Heart left ventricle (tissue), 16 donors: ENCODE measurements at regions of chr16 and their contacts with region 1.

Region 1: GRCh38 chr16:67028555-67029248 is at the start of gene CBFB:
- DNase-seq: peak; percentile 94 to 97 (median 94)
- ATAC-seq: peak; percentile 87 to 96 (median 94)
- H3K4me3 ChIP-seq: peak within 1 kb of the TSS; percentile 58 to 99 (median 94)
- H3K27ac ChIP-seq: peak within 1 kb of the TSS; percentile 90 to 100 (median 99)
- H3K4me1 ChIP-seq: peaks cover 0 to 36% (median 28%) of the 10 kb centered on the region in 12 donors
- H3K27me3 ChIP-seq: no peaks in the 10 kb centered on the region
- CTCF ChIP-seq: peak in 2 of 12 donors; percentile 7 to 23
- POLR2A ChIP-seq: peak; percentile 18 to 77
- total RNA-seq, gene CBFB: 16.4 to 53.6 (median 28.1) TPM

Region 2: DNA sequence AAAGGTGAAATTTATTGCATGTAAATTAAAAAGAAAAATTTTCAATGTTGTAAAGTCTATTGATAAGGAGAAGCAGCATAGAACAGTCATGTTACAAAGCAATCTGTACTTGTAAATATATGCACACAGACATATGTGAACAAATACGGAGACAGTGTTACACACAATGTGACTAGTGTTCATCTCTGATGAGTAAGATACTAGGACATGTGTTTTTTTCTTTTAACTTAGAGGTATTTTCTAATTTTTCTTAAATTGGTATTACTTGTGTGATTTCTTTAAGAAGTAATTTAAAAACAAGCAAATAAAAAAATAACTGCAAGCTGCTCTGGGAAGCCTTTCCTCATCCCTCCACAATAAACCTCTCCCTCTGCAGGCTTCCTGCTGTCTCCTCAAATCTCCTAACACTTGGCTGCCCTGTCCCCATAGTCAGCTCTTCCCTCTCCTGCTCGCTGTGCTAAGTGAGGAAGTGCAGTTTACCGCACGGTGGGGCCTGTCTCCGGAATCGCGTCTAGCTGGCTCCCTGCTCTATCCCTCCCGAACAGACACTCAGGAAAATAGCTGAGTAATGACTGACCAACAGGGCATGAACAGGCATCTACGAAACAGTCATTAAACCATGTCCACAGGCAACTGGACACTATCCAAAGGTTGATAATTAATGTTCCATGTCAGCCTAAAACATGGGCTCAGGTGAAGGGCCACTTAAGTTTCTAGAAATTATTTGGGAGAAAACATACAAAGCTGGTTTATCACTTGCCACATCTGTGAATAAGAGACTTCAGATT is 368.1 kb before region 1 on chr16:
- intact Hi-C with region 1: no loop called
- DNase-seq: peak; percentile 71 to 82 (median 75)
- ATAC-seq: peak; percentile 93 to 97 (median 97)
- H3K4me3 ChIP-seq: no peak overlapping the region
- H3K27ac ChIP-seq: peak overlapping the region; percentile 0 to 78 (median 62)
- H3K4me1 ChIP-seq: peaks cover 3 to 32% (median 25%) of the 10 kb centered on the region in 12 donors
- H3K27me3 ChIP-seq: no peaks in the 10 kb centered on the region
- CTCF ChIP-seq: peak in 7 of 12 donors; percentile 5 to 52 (median 33)
- POLR2A ChIP-seq: no peak

Region 3: GRCh38 chr16:67006930-67007658 is 21.6 kb before region 1 on chr16:
- intact Hi-C with region 1: no loop called
- DNase-seq: no peak
- ATAC-seq: no peak
- H3K4me3 ChIP-seq: no peak overlapping the region
- H3K27ac ChIP-seq: no peak overlapping the region
- H3K4me1 ChIP-seq: no peaks in the 10 kb centered on the region
- H3K27me3 ChIP-seq: peaks cover 0 to 7% (median 0%) of the 10 kb centered on the region in 9 donors
- CTCF ChIP-seq: no peak
- POLR2A ChIP-seq: no peak

Region 4: DNA sequence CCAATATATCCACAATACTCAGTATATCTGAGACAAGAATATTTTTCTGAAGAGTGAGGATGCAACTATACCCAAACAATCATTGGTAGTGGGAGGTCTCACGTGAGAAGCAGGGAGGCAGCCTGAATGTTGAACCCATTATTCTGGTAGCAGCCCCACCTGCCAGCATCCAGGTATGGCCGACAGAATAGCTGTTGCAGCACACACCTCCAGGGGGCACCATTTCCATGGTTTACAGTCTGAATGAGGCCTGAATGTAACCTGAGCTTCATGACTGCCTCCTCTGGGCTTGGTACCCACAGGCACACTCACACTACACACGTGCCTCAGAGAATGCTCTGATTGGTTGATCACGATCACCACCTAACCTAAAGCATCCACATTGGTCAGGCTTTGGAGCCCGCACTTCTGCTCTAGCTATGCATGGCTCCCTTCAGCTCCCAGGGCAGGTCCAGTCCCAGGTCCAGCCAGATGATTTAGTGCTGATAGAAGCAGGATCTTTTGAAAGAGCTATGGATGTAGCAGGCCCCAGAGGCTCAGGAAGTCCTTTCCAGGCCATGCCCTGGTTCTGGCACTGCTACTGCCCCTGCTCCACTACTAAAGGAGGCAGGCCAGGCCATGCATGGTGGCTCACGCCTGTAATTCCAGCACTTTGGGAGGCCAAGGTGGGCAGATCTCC is 10.8 kb before region 1 on chr16:
- intact Hi-C with region 1: loop called in 1 of 10 experiments (anchors 1 kb)
- DNase-seq: peak in 2 of 5 donors; percentile 45 to 47
- ATAC-seq: peak; percentile 14 to 41 (median 35)
- H3K4me3 ChIP-seq: no peak overlapping the region
- H3K27ac ChIP-seq: no peak overlapping the region
- H3K4me1 ChIP-seq: peaks cover 0 to 22% (median 18%) of the 10 kb centered on the region in 12 donors
- H3K27me3 ChIP-seq: peaks cover 0 to 20% (median 0%) of the 10 kb centered on the region in 9 donors
- CTCF ChIP-seq: peak in 11 of 12 donors; percentile 27 to 59 (median 50)
- POLR2A ChIP-seq: no peak

Region 5: DNA sequence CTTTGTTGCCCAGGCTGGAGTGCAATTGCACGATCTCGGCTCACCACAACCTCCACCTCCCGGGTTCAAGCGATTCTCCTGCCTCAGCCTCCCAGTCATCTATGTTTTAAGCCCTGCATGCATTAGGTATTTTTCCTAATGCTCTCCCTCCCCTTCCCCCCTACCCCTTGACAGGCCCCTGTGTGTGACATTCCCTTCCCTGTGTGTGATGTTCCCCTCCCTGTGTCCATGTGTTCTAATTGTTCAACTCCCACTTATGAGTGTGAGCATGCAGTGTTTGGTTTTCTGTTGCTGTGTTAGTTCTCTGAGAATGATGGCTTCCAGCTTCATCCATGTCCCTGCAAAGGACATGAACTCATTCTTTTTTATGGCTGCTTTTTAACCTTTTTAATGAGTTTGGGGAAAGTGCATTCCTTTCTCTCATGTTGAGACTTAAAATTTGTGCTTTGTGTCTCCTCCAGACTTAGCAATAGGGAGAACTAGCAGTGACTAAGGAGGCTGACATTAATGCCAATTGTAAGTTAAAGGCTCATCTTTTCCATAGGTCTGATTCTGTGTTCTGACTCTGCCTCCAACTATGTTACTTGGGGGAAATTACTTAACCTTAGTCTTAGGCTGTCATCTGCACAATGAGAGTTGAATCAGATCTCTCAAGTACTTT is 63.3 kb after region 1 on chr16:
- intact Hi-C with region 1: loop called in 1 of 10 experiments (anchors 10 kb)
- DNase-seq: no peak
- ATAC-seq: no peak
- H3K4me3 ChIP-seq: no peak overlapping the region
- H3K27ac ChIP-seq: no peak overlapping the region
- H3K4me1 ChIP-seq: peaks cover 0 to 6% (median 0%) of the 10 kb centered on the region in 12 donors
- H3K27me3 ChIP-seq: no peaks in the 10 kb centered on the region
- CTCF ChIP-seq: no peak
- POLR2A ChIP-seq: no peak

Region 6: DNA sequence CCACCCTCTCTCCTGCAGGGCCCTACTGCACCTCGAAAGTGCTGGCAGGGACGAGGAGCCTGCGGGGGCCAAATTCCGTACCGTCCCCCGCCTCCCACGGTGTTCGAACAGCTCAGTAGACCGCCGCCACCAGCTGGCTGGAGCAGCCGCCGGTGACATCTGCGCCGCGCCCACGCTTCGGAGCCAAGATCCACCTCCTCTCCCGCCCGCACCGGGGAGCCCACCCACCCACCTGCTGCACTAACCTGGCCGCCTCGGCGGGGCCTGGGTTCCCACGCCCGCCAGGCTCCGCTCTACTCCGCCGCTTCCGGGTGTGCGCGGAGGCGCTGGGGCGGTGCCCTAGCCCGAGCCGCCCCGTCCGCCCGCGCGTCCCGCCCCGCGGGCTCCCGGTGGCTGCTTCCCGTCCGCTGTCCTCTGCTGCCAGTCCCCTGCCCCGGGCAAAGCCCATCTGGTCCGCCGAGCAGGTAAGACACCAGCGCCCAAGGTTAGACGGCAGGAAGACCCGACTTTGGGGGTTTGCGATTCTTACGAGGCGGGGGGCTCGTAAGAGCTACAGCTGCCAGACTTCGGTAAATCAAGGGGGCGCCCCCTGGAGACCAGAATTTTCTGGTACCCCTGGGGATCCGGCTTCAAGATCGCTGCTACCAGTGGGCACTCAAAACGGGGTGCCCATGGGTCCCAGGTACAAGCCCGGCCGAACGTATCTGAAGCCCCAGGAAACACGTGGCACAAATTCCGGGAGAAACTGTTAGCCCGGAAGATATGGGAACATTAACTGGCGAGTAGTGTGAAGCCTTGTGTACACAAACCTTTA is 131.1 kb after region 1 on chr16 and contains the starts of genes FBXL8 and TRADD:
- intact Hi-C with region 1: loop called in 1 of 10 experiments (anchors 5 kb)
- DNase-seq: peak; percentile 75 to 88 (median 82)
- ATAC-seq: peak; percentile 23 to 75 (median 71)
- H3K4me3 ChIP-seq: peak within 1 kb of the TSS; percentile 75 to 98 (median 97)
- H3K27ac ChIP-seq: peak within 1 kb of the TSS; percentile 36 to 94 (median 83)
- H3K4me1 ChIP-seq: peaks cover 0 to 68% (median 58%) of the 10 kb centered on the region in 12 donors
- H3K27me3 ChIP-seq: peaks cover 0 to 32% (median 2%) of the 10 kb centered on the region in 9 donors
- CTCF ChIP-seq: peak in 11 of 12 donors; percentile 7 to 59 (median 38)
- POLR2A ChIP-seq: peak in 1 of 2 donors; percentile 76
- total RNA-seq, gene FBXL8: 5.0 to 13.4 (median 7.2) TPM
- total RNA-seq, gene TRADD: 4.7 to 14.3 (median 8.4) TPM